Calu3 (cell line): ENCODE measurements at regions of chr3 and their contacts with region 1.

Region 1: GRCh38 chr3:44198284-44199269 is 43.1 kb upstream of the TOPAZ1 start:
- DNase-seq: peak; percentile 80
- H3K4me3 Mint-ChIP-seq: no peak overlapping the region
- H3K27ac Mint-ChIP-seq: no peak overlapping the region
- H3K4me1 Mint-ChIP-seq: no peaks in the 10 kb centered on the region
- H3K27me3 Mint-ChIP-seq: peaks cover 22% of the 10 kb centered on the region
- CTCF ChIP-seq: peak; percentile 68

Region 2: DNA sequence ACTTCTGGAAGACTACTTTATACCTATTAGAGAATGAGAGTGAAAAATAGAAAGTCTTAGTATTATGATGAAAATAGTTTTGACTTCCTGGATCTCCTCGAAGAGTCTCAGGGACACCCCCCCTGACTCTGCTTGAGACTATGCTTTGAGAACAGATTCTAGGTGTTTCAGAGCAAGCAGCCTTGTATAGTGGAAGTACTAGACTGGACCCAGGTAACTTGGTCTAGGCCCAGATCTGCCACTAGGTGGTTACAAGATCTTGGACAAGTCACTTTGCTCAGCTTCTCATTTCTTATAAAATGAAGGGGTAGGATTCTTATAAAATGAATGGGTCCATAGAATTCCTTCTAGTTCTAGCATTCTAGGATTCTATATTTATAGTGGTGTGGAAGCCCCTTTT is 498.7 kb before region 1 on chr3:
- CTCF ChIA-PET with region 1: no interaction called
- intact Hi-C with region 1: loop called (anchors 5 kb)
- DNase-seq: peak; percentile 26
- H3K4me3 Mint-ChIP-seq: no peak overlapping the region
- H3K27ac Mint-ChIP-seq: no peak overlapping the region
- H3K4me1 Mint-ChIP-seq: peaks cover 30% of the 10 kb centered on the region
- H3K27me3 Mint-ChIP-seq: no peaks in the 10 kb centered on the region
- CTCF ChIP-seq: peak; percentile 23

Region 3: GRCh38 chr3:43838877-43839276 is 359.7 kb before region 1 on chr3:
- CTCF ChIA-PET with region 1: no interaction called
- intact Hi-C with region 1: loop called (anchors 5 kb)
- DNase-seq: no peak
- H3K4me3 Mint-ChIP-seq: no peak overlapping the region
- H3K27ac Mint-ChIP-seq: no peak overlapping the region
- H3K4me1 Mint-ChIP-seq: no peaks in the 10 kb centered on the region
- H3K27me3 Mint-ChIP-seq: peaks cover 66% of the 10 kb centered on the region
- CTCF ChIP-seq: peak; percentile 16

Region 4: GRCh38 chr3:43879166-43879565 is 319.4 kb before region 1 on chr3:
- CTCF ChIA-PET with region 1: no interaction called
- intact Hi-C with region 1: loop called (anchors 1 kb)
- DNase-seq: peak; percentile 59
- H3K4me3 Mint-ChIP-seq: no peak overlapping the region
- H3K27ac Mint-ChIP-seq: no peak overlapping the region
- H3K4me1 Mint-ChIP-seq: peaks cover 14% of the 10 kb centered on the region
- H3K27me3 Mint-ChIP-seq: no peaks in the 10 kb centered on the region
- CTCF ChIP-seq: no peak

Region 5: GRCh38 chr3:44003801-44004200 is 194.8 kb before region 1 on chr3:
- CTCF ChIA-PET with region 1: no interaction called
- intact Hi-C with region 1: no loop called
- DNase-seq: no peak
- H3K4me3 Mint-ChIP-seq: no peak overlapping the region
- H3K27ac Mint-ChIP-seq: no peak overlapping the region
- H3K4me1 Mint-ChIP-seq: peaks cover 7% of the 10 kb centered on the region
- H3K27me3 Mint-ChIP-seq: no peaks in the 10 kb centered on the region
- CTCF ChIP-seq: no peak

Region 6: GRCh38 chr3:44160818-44161217 is 37.8 kb before region 1 on chr3:
- CTCF ChIA-PET with region 1: no interaction called
- intact Hi-C with region 1: no loop called
- DNase-seq: no peak
- H3K4me3 Mint-ChIP-seq: no peak overlapping the region
- H3K27ac Mint-ChIP-seq: no peak overlapping the region
- H3K4me1 Mint-ChIP-seq: no peaks in the 10 kb centered on the region
- H3K27me3 Mint-ChIP-seq: peaks cover 35% of the 10 kb centered on the region
- CTCF ChIP-seq: no peak

Region 7: DNA sequence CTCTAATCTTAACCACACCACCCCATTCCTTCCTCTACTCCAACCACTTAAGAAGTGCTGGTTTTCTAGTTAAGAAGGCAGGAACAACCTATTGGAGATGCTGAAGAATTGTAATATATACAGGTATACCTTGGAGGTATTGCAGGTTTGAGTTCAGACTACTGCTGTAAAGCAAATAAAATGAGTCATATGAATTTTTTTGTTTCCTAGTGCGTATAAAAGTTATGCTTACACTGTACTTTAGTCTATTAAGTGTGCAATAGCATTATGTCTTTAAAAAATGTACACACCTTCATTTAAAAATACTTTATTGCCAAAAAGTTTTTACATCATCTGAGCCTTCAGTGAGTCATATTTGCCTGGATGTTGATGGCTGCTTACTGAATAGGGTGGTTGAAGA is 65.6 kb after region 1 on chr3:
- CTCF ChIA-PET with region 1: no interaction called
- intact Hi-C with region 1: no loop called
- DNase-seq: no peak
- H3K4me3 Mint-ChIP-seq: no peak overlapping the region
- H3K27ac Mint-ChIP-seq: no peak overlapping the region
- H3K4me1 Mint-ChIP-seq: no peaks in the 10 kb centered on the region
- H3K27me3 Mint-ChIP-seq: no peaks in the 10 kb centered on the region
- CTCF ChIP-seq: no peak

Region 8: DNA sequence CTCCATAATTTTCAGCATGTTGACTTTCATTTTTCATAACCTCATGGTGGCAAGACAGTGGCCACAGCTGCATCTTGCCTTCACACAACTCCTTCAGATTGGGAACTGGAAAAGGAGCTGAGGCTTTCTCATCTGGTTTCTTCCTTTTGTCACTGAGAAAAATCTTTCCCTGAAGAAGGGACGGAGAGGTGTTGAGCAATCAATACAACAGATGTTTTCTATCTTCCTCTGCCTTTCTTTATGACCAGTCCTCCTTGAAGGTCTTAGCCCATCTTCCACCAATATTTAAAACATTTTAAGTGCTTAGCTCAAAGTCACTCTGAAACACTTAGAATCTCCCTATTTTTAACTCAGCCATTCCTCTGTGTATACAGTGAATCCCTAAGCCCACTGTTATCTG is 398.0 kb after region 1 on chr3:
- CTCF ChIA-PET with region 1: no interaction called
- intact Hi-C with region 1: no loop called
- DNase-seq: no peak
- H3K4me3 Mint-ChIP-seq: no peak overlapping the region
- H3K27ac Mint-ChIP-seq: no peak overlapping the region
- H3K4me1 Mint-ChIP-seq: no peaks in the 10 kb centered on the region
- H3K27me3 Mint-ChIP-seq: no peaks in the 10 kb centered on the region
- CTCF ChIP-seq: no peak